ENCODE measurements at regions of chr7 and their contacts with region 1.

Region 1: GRCh38 chr7:74672343-74672915 is 14.9 kb downstream of the GTF2I start:
- DNase-seq: no peak
- ATAC-seq: no peak
- H3K4me3 ChIP-seq: no peak overlapping the region
- H3K4me3 Mint-ChIP-seq: no peak overlapping the region
- H3K27ac ChIP-seq: no peak overlapping the region
- H3K27ac Mint-ChIP-seq: peak overlapping the region; percentile 62
- H3K4me1 ChIP-seq: peaks cover 15% of the 10 kb centered on the region
- H3K4me1 Mint-ChIP-seq: peaks cover 55% of the 10 kb centered on the region
- H3K27me3 ChIP-seq: no peaks in the 10 kb centered on the region
- H3K27me3 Mint-ChIP-seq: no peaks in the 10 kb centered on the region
- CTCF ChIP-seq: no peak

Region 2: DNA sequence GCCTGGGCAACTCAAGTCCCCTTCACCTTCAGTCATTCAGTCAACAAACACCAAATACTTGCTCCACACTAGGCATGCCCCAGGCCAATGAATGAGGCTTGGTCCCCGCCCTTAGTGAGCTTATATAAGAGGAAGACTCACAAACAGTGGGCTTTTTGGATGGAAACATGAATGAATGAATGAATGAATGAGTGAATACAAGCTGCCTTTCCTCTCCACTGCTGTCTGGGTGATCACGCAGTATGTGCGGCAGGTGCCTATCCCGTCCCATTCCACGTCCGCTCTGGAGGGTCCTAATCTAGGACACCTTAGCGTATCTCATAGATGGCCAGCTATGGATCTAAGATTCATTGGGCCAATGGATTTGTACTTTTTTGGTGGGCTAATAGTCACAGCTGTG is 34.7 kb before region 1 on chr7:
- CTCF ChIA-PET with region 1: no interaction called
- POLR2A ChIA-PET with region 1: no interaction called
- intact Hi-C with region 1: loop called in 1 of 2 experiments (anchors 5 kb)
- DNase-seq: no peak
- ATAC-seq: no peak
- H3K4me3 ChIP-seq: no peak overlapping the region
- H3K4me3 Mint-ChIP-seq: no peak overlapping the region
- H3K27ac ChIP-seq: no peak overlapping the region
- H3K27ac Mint-ChIP-seq: no peak overlapping the region
- H3K4me1 ChIP-seq: no peaks in the 10 kb centered on the region
- H3K4me1 Mint-ChIP-seq: no peaks in the 10 kb centered on the region
- H3K27me3 ChIP-seq: no peaks in the 10 kb centered on the region
- H3K27me3 Mint-ChIP-seq: no peaks in the 10 kb centered on the region
- CTCF ChIP-seq: no peak